ENCODE measurements at regions of chr2 and their contacts with region 1.

Region 1: GRCh38 chr2:145752091-145752806 is 1232.3 kb upstream of the ZEB2 start:
- DNase-seq: peak; percentile 60
- H3K4me3 Mint-ChIP-seq: peak overlapping the region; percentile 42
- H3K27ac Mint-ChIP-seq: peak overlapping the region; percentile 91
- H3K4me1 Mint-ChIP-seq: peaks cover 56% of the 10 kb centered on the region
- H3K27me3 Mint-ChIP-seq: no peaks in the 10 kb centered on the region
- CTCF ChIP-seq: peak; percentile 63

Region 2: GRCh38 chr2:144198117-144198516 is 1554.1 kb before region 1 on chr2:
- CTCF ChIA-PET with region 1: no interaction called
- intact Hi-C with region 1: loop called (anchors 10 kb)
- DNase-seq: peak; percentile 13
- H3K4me3 Mint-ChIP-seq: no peak overlapping the region
- H3K27ac Mint-ChIP-seq: peak overlapping the region; percentile 71
- H3K4me1 Mint-ChIP-seq: peaks cover 19% of the 10 kb centered on the region
- H3K27me3 Mint-ChIP-seq: no peaks in the 10 kb centered on the region
- CTCF ChIP-seq: no peak

Region 3: GRCh38 chr2:144942516-144943256 is 809.6 kb before region 1 on chr2:
- CTCF ChIA-PET with region 1: no interaction called
- intact Hi-C with region 1: loop called (anchors 1 kb)
- DNase-seq: peak; percentile 21
- H3K4me3 Mint-ChIP-seq: peak overlapping the region; percentile 1
- H3K27ac Mint-ChIP-seq: peak overlapping the region; percentile 80
- H3K4me1 Mint-ChIP-seq: peaks cover 32% of the 10 kb centered on the region
- H3K27me3 Mint-ChIP-seq: no peaks in the 10 kb centered on the region
- CTCF ChIP-seq: no peak

Region 4: DNA sequence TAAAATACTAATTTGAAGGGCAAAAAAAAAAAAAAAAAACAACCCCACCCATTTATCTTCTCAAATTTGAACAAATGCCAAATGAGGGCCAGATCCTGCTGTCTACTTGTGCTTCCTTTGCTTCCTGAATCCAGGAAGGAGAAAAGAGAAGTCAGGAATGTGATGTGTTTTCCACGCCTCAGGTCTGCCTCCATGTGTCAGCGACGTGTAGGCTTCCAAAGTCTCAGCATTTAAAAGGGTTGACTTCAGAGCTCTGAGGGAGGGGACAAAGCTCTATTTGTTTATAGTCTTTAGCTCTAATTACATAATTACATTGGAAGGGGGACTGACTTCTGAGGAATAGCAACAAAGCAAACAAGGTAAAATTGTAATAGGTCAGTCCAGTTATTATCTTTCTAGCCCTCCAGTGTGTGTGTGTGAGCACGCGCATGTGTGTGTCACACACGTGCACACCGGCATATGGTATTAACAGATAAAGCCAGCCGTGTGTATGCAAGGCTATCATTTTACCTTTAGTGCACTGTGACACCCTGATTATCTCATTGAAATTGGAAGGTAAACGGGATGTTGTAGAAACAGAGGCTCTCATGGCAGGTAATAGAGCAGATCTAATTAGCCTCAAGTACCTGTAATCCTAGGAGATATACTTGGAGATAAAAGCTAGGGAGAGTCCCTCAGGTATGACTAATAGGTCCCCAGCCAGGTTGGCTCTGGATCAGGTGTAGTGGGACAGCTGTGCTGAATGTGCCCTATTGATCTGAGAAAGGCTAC is 320.9 kb before region 1 on chr2:
- CTCF ChIA-PET with region 1: interaction called, 7 read pairs
- intact Hi-C with region 1: loop called (anchors 5 kb)
- DNase-seq: peak; percentile 69
- H3K4me3 Mint-ChIP-seq: no peak overlapping the region
- H3K27ac Mint-ChIP-seq: no peak overlapping the region
- H3K4me1 Mint-ChIP-seq: peaks cover 14% of the 10 kb centered on the region
- H3K27me3 Mint-ChIP-seq: peaks cover 11% of the 10 kb centered on the region
- CTCF ChIP-seq: no peak

Region 5: GRCh38 chr2:145685323-145686050 is 66.8 kb before region 1 on chr2:
- CTCF ChIA-PET with region 1: no interaction called
- intact Hi-C with region 1: loop called (anchors 2 kb)
- DNase-seq: peak; percentile 50
- H3K4me3 Mint-ChIP-seq: peak overlapping the region; percentile 28
- H3K27ac Mint-ChIP-seq: peak overlapping the region; percentile 99
- H3K4me1 Mint-ChIP-seq: peaks cover 43% of the 10 kb centered on the region
- H3K27me3 Mint-ChIP-seq: no peaks in the 10 kb centered on the region
- CTCF ChIP-seq: no peak

Region 6: GRCh38 chr2:145874466-145874865 is 122.2 kb after region 1 on chr2:
- CTCF ChIA-PET with region 1: no interaction called
- intact Hi-C with region 1: no loop called
- DNase-seq: no peak
- H3K4me3 Mint-ChIP-seq: no peak overlapping the region
- H3K27ac Mint-ChIP-seq: no peak overlapping the region
- H3K4me1 Mint-ChIP-seq: no peaks in the 10 kb centered on the region
- H3K27me3 Mint-ChIP-seq: no peaks in the 10 kb centered on the region
- CTCF ChIP-seq: no peak

Region 7: GRCh38 chr2:146312899-146313298 is 560.6 kb after region 1 on chr2:
- CTCF ChIA-PET with region 1: interaction called, 4 read pairs
- intact Hi-C with region 1: loop called (anchors 2 kb)
- DNase-seq: no peak
- H3K4me3 Mint-ChIP-seq: no peak overlapping the region
- H3K27ac Mint-ChIP-seq: no peak overlapping the region
- H3K4me1 Mint-ChIP-seq: no peaks in the 10 kb centered on the region
- H3K27me3 Mint-ChIP-seq: no peaks in the 10 kb centered on the region
- CTCF ChIP-seq: no peak

Measured in Calu3 (cell line).